ENCODE measurements at regions of chr20 and their contacts with region 1.

Region 1: DNA sequence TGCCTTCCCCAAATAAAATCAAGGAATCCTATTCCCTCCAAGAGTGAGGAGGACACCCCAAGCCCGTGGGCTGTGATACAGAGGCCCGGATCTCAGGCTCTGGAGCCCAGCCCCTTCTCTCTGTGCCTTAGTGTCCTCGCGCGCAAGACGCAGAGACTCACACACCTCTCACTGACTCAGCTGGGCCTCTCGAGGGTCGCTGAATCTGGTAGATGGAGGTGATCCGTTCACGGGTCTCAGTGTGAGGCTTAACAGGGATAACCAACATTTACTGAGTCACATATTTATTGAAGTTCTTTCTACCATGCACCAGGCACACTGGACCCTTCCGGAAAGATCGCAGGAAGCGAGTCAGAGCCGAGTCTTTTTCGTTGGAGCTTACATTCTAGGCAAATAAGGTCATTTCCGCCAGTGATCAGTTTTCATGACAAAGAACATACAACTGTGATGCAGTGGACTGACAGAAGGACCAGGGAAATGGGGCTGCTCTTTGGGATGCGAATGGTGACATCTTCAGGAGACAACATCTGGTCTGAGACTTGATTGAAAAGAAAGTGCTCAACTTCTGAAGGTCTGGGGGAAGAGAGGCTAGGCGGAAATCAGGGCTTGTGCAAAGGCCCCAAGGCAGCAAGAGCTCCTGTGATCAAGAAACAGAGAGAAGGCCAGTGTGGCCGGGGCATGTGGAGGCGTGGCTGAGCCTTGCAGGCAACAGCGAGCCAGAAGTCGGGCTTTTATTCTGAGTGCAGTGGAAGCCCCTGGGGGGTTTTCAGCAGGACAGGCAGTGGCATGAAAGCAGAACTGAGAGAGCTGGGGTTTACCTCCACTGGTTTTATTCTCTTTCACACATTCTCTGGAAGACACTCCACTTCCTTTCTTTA is 56.8 kb downstream of the APCDD1L start:
- DNase-seq: no peak
- H3K4me3 ChIP-seq: no peak overlapping the region
- H3K27ac ChIP-seq: no peak overlapping the region
- H3K4me1 ChIP-seq: peaks cover 3% of the 10 kb centered on the region
- H3K27me3 ChIP-seq: no peaks in the 10 kb centered on the region
- CTCF ChIP-seq: no peak

Region 2: GRCh38 chr20:58246346-58246745 is 212.1 kb before region 1 on chr20:
- intact Hi-C with region 1: loop called (anchors 10 kb)
- DNase-seq: no peak
- H3K4me3 ChIP-seq: no peak overlapping the region
- H3K27ac ChIP-seq: no peak overlapping the region
- H3K4me1 ChIP-seq: no peaks in the 10 kb centered on the region
- H3K27me3 ChIP-seq: no peaks in the 10 kb centered on the region
- CTCF ChIP-seq: peak; percentile 38

Region 3: DNA sequence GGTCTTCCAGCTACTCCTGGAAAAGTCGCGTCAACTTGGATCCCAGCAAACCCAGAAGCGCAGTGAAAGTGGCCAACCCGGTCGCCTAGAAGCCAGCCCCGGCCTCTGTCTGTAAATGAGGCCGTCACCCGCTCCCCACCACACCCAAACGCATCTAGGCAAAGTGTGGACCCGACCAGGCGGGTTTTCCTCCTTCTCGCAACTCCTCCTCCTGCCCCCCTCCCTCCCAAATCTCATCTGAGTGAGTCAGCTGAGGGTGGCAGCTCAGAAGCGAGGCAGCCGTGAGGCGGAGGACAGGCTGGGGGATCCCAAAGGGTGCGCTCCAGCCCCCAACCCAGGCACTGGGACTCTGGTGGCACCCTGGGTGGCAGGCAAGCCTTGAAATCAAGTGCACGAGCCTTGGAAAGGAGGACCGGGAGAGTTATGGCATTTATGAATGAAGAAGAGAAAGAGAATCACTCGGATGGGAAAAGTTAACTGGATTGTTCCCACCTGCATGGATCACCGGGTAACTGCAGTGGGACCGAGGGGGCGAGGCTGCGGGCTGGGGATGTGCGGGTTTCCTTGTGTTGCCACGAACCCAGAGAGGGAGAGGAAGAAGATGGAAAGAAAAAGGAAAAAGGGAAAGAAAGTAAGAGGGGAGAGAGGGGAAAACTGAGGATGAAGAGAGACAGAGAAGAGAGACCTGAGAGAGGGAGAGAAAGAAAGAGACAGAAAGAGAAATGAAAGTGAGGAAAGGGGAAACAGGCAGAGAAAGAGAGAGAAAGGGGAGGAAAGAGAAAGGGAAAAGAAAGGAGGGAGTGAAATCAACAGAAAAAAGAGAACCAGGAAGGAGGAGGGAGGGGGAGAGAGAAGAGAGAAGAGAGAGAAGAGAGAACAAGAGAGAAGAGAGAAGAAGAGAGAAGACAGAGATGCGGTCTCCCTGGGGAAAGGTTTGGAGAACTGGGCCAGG is 57.1 kb after region 1 on chr20 and contains the start of gene APCDD1L:
- intact Hi-C with region 1: no loop called
- DNase-seq: no peak
- H3K4me3 ChIP-seq: peak within 1 kb of the TSS; percentile 53
- H3K27ac ChIP-seq: no peak within 1 kb of the TSS
- H3K4me1 ChIP-seq: peaks cover 5% of the 10 kb centered on the region
- H3K27me3 ChIP-seq: peaks cover 72% of the 10 kb centered on the region
- CTCF ChIP-seq: no peak
- total RNA-seq, gene APCDD1L: 0.91 TPM

Region 4: GRCh38 chr20:58650776-58651558 is 192.5 kb after region 1 on chr20 and contains the start of gene STX16:
- intact Hi-C with region 1: no loop called
- DNase-seq: peak; percentile 90
- H3K4me3 ChIP-seq: peak within 1 kb of the TSS; percentile 85
- H3K27ac ChIP-seq: peak within 1 kb of the TSS; percentile 97
- H3K4me1 ChIP-seq: peaks cover 60% of the 10 kb centered on the region
- H3K27me3 ChIP-seq: no peaks in the 10 kb centered on the region
- CTCF ChIP-seq: peak; percentile 70
- total RNA-seq, gene STX16: 28.0 TPM

Measured in left ventricle myocardium inferior (tissue), 1 donor.